A673 (cell line): ENCODE measurements at regions of chr15 and their contacts with region 1.

Region 1: DNA sequence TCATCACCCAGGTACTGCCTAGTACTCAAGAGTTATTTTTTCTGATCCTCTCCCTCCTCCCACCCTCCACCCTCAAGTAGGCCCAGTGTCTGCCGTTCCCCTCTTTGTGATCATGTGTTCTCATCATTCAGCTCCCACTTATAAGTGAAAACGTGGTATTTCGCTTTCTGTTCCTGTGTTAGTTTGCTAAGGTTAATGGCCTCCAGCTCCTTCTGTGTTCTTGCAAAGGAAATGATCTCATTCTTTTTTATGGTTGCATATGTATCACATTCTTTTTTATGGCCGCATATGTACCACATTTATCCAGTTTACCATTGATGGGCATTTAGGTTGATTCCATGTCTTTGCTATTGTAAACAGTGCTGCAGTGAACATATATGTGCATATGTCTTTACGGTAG is 8.2 kb upstream of the GANC start:
- DNase-seq: peak; percentile 18
- H3K4me3 ChIP-seq: no peak overlapping the region
- H3K27ac ChIP-seq: no peak overlapping the region
- H3K4me1 ChIP-seq: no peaks in the 10 kb centered on the region
- H3K27me3 ChIP-seq: no peaks in the 10 kb centered on the region
- CTCF ChIP-seq: no peak

Region 2: GRCh38 chr15:42035435-42035761 is 229.4 kb before region 1 on chr15:
- CTCF ChIA-PET with region 1: no interaction called
- POLR2A ChIA-PET with region 1: no interaction called
- intact Hi-C with region 1: no loop called
- DNase-seq: peak; percentile 72
- H3K4me3 ChIP-seq: no peak overlapping the region
- H3K27ac ChIP-seq: peak overlapping the region; percentile 61
- H3K4me1 ChIP-seq: peaks cover 14% of the 10 kb centered on the region
- H3K27me3 ChIP-seq: no peaks in the 10 kb centered on the region
- CTCF ChIP-seq: no peak

Region 3: DNA sequence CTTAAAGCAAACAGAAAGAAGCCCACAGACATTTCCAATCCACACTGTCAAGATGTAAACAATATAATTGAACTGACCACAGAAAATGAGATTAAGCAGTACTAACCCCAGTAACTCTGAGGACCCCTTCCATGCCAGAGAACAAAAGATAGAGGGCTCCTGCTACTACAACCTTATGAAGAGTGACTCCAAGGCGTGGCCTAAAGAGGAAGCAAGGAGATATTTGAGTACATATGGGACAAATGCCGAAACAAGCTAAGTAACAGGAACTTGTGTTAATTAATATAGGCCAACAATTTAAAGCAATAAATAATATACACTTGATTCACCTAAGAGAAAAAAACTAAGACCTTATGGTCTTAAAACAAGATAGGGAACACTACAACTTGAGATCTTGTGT is 31.7 kb before region 1 on chr15:
- CTCF ChIA-PET with region 1: no interaction called
- POLR2A ChIA-PET with region 1: no interaction called
- intact Hi-C with region 1: no loop called
- DNase-seq: no peak
- H3K4me3 ChIP-seq: no peak overlapping the region
- H3K27ac ChIP-seq: no peak overlapping the region
- H3K4me1 ChIP-seq: no peaks in the 10 kb centered on the region
- H3K27me3 ChIP-seq: no peaks in the 10 kb centered on the region
- CTCF ChIP-seq: no peak

Region 4: DNA sequence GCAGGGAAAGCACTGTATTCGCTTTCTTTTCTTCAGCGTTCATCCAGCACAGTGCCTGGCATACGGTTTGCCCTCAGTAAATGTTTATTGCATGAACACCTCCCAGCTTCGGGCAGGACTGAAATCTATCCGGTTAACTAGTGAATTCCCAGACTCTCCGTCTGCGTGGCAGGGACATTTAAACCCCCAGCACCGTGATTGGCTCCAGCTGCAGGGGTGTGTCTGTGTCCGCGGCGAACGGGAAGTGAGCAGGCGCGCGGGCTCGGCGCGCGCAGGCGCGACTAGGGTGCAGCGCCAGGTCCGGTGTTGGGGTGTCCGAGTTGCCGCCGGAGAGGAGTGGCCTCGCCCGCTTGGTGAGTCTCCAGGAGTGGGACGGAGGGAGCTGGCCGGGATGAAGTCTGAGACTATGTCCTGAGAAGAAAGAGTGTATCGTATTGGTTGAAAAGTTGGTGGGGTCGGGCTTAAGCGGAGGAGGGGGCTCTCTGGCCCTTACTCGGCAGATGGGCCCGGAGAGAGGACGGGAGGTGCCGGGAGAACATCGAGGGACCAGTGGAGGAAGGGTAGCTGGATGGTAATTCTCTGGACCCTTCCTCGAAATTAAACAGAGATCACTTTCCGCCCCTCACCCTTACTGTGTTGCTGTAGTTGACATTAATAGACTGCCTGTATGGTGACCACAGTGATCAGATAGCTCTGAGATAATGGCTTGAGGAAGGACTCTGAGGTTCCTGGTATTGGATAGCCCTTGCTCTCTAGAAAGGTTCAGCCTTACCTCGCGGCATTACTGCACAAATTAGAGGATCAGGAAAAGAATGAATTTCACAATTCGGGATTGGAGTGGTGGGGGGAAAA is 230.8 kb after region 1 on chr15 and contains the start of gene SNAP23:
- CTCF ChIA-PET with region 1: no interaction called
- POLR2A ChIA-PET with region 1: interaction called, 17 read pairs
- intact Hi-C with region 1: no loop called
- DNase-seq: peak; percentile 96
- H3K4me3 ChIP-seq: peak within 1 kb of the TSS; percentile 72
- H3K27ac ChIP-seq: peak within 1 kb of the TSS; percentile 89
- H3K4me1 ChIP-seq: peaks cover 14% of the 10 kb centered on the region
- H3K27me3 ChIP-seq: no peaks in the 10 kb centered on the region
- CTCF ChIP-seq: no peak
- total RNA-seq, gene SNAP23: 112 and 124 TPM in 2 replicates